CD8-positive, alpha-beta memory T cell (primary cell): ENCODE measurements at regions of chr3 and their contacts with region 1.

Region 1: DNA sequence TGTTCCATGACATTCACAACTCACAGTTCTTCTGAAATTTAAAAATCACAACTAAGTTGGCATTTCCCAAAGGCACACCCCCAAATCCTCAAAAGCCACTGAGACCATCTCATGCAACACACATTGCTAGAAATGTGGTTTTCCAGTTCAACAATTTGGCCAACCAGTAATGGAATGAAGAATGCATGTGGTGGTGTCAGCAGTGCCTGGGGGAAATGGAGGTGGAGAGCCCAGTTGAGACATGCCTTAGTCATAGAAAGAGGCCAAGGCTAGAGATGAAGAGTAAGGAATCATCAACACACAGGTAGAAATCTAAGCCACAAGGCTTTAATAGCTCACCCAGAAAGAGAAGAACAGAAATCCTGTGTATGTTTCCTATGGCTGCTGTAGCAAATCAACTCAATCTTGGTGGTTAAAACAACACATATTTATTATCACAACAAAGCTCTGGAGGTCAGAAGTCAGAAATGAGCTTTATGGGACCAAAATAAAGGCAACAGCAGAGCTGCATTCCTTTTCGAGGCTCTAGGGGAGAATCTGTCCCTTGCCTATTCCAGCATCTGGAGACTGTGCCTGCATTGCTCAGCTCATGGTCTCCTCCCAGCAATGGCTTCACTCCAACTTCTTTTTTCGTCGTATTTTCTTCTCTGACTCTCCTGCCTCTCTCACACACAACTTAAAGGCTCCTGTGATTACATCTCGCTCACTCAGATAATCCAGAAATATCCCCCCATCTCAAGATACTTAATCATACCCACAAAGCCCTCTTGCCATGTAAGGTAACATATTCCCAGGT is 54.0 kb downstream of the SNTN start:
- DNase-seq: no peak
- H3K4me3 ChIP-seq: no peak overlapping the region
- H3K4me3 Mint-ChIP-seq: no peak overlapping the region
- H3K27ac ChIP-seq: no peak overlapping the region
- H3K27ac Mint-ChIP-seq: no peak overlapping the region
- H3K4me1 ChIP-seq: no peaks in the 10 kb centered on the region
- H3K4me1 Mint-ChIP-seq: no peaks in the 10 kb centered on the region
- H3K27me3 ChIP-seq: no peaks in the 10 kb centered on the region
- H3K27me3 Mint-ChIP-seq: no peaks in the 10 kb centered on the region

Region 2: DNA sequence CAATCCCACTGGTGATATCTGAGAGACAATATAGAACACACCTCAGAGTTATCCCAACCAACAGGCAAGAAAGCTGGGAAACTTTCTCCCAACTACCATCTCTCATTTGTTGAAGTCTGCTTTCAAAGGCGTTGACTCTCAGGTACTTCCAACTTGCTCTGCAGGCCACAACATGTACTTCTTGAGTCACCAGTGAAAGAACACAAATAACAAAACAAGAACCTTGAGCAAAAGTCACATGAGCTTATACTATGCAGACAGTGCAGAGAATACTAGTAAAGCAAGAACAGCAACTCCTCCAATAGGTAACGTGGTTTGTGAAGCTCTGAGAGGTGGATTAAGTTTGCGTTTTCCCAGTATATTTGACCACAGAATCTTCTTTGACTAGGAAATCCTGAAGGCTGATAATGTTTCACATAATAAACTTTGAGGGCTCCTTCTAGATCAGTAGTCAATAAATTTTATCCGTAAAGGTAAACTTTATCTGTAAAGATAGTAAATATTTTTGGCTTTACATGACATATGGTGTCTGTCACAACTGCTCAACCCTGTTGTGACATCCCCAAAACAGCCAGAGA is 33.3 kb before region 1 on chr3:
- CTCF ChIA-PET with region 1: no interaction called
- POLR2A ChIA-PET with region 1: interaction called, 11 read pairs
- DNase-seq: no peak
- H3K4me3 ChIP-seq: no peak overlapping the region
- H3K4me3 Mint-ChIP-seq: no peak overlapping the region
- H3K27ac ChIP-seq: no peak overlapping the region
- H3K27ac Mint-ChIP-seq: no peak overlapping the region
- H3K4me1 ChIP-seq: no peaks in the 10 kb centered on the region
- H3K4me1 Mint-ChIP-seq: no peaks in the 10 kb centered on the region
- H3K27me3 ChIP-seq: no peaks in the 10 kb centered on the region
- H3K27me3 Mint-ChIP-seq: no peaks in the 10 kb centered on the region